Activated CD8-positive, alpha-beta T cell treated with anti-CD3 and anti-CD28 coated beads, Interleukin-2, amount 10 ng/mL, durations not matched to agents 7 days and 5 days (primary cell): ENCODE measurements at regions of chr2 and their contacts with region 1.

Region 1: DNA sequence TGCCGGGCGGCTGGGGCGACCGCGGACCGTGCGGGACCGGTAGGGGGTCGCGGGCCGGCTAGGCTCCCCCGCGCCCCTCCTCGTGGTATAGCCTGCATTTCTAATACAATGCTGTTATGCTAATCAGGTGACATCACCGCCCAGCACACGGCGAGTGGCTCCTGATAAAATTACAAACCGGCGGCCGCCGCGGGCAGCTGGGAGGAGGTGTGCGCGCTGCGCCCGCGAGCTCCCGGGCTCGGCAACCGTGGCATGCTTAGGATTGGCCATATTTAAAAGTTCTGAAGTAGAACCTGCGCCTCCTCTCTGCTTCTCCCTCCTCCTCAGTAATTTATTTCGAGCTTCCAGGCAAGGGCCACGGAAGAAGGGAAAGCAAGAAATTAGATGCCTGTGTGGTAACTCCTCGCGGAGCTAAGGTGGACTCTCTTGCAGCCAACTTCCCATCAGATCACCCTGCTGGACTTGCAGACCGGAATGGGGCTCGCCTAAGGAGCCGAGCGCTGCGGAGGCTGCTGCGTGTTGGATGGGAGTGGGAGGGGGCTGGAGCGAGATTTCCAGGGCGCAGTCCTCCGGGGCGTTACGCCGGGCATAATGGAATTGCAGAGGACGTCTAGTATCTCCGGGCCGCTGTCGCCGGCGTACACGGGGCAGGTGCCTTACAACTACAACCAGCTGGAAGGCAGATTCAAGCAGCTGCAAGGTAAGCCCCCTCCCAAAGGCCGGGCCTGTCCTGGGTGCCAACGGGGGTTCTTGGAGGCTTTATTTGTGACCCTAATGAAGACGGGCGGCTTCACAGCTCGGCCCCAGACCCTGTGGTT is 102.3 kb downstream of the SPTBN1 start:
- DNase-seq: peak; percentile 82
- ATAC-seq: peak; percentile 73
- H3K4me3 Mint-ChIP-seq: peak overlapping the region; percentile 93
- H3K27ac Mint-ChIP-seq: peak overlapping the region; percentile 90
- H3K4me1 Mint-ChIP-seq: peaks cover 42% of the 10 kb centered on the region
- H3K27me3 Mint-ChIP-seq: no peaks in the 10 kb centered on the region

Region 2: DNA sequence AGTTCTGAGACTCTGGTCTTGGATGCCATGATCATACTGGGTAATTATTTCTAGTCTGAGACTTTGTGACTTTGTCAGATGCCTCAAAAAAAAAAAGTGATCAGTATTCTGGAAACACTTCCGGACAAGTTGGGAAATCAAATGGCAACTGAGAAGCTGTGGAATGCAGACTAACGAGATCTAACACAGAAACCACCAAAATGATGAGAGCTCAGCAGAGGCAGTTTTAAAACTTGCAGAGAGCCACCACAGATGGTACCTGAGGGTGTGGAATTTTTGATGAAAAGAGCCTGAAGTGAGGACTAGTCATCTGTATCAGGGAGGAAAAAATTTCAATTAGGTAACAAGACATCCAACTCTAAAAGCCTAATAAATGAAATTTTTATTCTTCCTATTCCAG is 693.1 kb before region 1 on chr2:
- CTCF ChIA-PET with region 1: no interaction called
- POLR2A ChIA-PET with region 1: no interaction called
- DNase-seq: no peak
- ATAC-seq: no peak
- H3K4me3 Mint-ChIP-seq: no peak overlapping the region
- H3K27ac Mint-ChIP-seq: peak overlapping the region; percentile 16
- H3K4me1 Mint-ChIP-seq: no peaks in the 10 kb centered on the region
- H3K27me3 Mint-ChIP-seq: no peaks in the 10 kb centered on the region

Region 3: GRCh38 chr2:54522624-54523281 is 35.6 kb before region 1 on chr2:
- CTCF ChIA-PET with region 1: interaction called, 38 read pairs
- POLR2A ChIA-PET with region 1: interaction called, 19 read pairs
- DNase-seq: peak; percentile 78
- ATAC-seq: peak; percentile 99
- H3K4me3 Mint-ChIP-seq: no peak overlapping the region
- H3K27ac Mint-ChIP-seq: no peak overlapping the region
- H3K4me1 Mint-ChIP-seq: peaks cover 21% of the 10 kb centered on the region
- H3K27me3 Mint-ChIP-seq: peaks cover 9% of the 10 kb centered on the region

Region 4: DNA sequence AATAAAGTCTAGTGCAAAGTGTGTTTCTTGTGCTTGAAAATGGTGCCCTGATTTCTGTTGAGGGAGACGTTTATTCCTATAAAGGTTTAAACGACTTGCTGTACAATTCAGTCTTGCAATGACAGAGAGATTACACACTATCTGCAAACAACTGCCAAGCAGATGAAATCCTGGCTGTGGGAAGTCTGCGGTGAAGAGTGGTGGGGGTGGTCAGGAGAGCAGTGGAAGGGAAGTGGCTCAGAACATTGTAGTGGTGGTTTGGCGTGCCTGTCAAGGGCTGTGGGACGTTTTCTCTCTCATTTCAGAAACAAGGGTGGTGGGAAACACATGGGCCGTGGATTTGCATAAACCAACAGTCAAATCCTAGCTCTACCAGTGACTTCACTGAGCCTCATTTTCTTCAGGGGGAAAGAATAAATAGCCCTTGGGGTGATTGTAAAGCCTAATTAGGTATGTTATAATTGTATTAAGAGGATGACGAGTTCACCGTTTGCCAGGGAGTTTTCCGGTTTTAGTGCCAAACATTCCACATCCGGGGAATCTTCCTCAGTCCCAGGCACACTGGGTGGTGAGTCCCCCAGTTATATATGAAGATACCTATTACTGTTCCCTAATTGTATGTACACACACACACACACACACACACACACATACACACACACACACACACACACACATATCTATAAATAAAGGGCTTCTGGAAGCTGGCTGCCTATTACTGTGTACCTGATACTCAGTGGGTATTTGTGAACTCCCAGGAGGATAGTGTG is 12.7 kb after region 1 on chr2:
- CTCF ChIA-PET with region 1: interaction called, 116 read pairs
- POLR2A ChIA-PET with region 1: interaction called, 258 read pairs
- DNase-seq: peak; percentile 88
- ATAC-seq: peak; percentile 41
- H3K4me3 Mint-ChIP-seq: peak overlapping the region; percentile 72
- H3K27ac Mint-ChIP-seq: peak overlapping the region; percentile 84
- H3K4me1 Mint-ChIP-seq: peaks cover 90% of the 10 kb centered on the region
- H3K27me3 Mint-ChIP-seq: no peaks in the 10 kb centered on the region

Region 5: GRCh38 chr2:54589340-54590215 is 31.2 kb after region 1 on chr2:
- CTCF ChIA-PET with region 1: interaction called, 17 read pairs
- POLR2A ChIA-PET with region 1: interaction called, 47 read pairs
- DNase-seq: peak; percentile 59
- ATAC-seq: peak; percentile 71
- H3K4me3 Mint-ChIP-seq: peak overlapping the region; percentile 59
- H3K27ac Mint-ChIP-seq: peak overlapping the region; percentile 89
- H3K4me1 Mint-ChIP-seq: peaks cover 80% of the 10 kb centered on the region
- H3K27me3 Mint-ChIP-seq: no peaks in the 10 kb centered on the region

Region 6: DNA sequence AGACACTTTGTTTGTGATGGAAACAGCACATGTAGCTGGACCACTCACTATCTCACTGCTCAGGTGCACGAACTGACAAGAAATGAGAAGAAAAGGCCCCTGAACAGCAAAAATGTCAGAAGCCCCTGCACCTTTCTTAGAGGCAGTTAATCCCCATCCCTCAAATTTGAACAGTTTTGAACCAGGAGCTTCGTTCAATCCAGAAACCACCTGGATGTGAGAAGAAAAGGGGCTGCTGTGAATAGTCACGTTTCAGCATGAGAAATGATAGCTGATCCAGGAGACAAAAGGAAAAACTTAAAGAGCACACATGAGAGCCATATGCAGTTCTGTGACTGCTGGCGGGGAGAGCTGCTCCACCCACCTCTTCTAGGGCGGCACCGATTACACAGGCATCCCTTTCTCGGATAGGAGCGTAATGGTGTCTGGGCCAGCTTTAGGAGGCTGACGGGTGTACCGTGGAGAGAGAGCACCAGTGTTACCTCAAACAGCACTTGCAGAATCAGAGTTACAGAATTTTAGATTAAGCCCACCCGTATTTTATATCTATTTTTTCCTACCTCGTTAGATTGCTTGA is 48.1 kb after region 1 on chr2:
- CTCF ChIA-PET with region 1: interaction called, 41 read pairs
- POLR2A ChIA-PET with region 1: interaction called, 14 read pairs
- DNase-seq: peak; percentile 42
- ATAC-seq: peak; percentile 57
- H3K4me3 Mint-ChIP-seq: peak overlapping the region; percentile 47
- H3K27ac Mint-ChIP-seq: peak overlapping the region; percentile 72
- H3K4me1 Mint-ChIP-seq: peaks cover 76% of the 10 kb centered on the region
- H3K27me3 Mint-ChIP-seq: no peaks in the 10 kb centered on the region

Region 7: GRCh38 chr2:54704688-54705605 is 146.6 kb after region 1 on chr2:
- CTCF ChIA-PET with region 1: interaction called, 14 read pairs
- POLR2A ChIA-PET with region 1: no interaction called
- DNase-seq: no peak
- ATAC-seq: peak; percentile 54
- H3K4me3 Mint-ChIP-seq: no peak overlapping the region
- H3K27ac Mint-ChIP-seq: no peak overlapping the region
- H3K4me1 Mint-ChIP-seq: peaks cover 15% of the 10 kb centered on the region
- H3K27me3 Mint-ChIP-seq: peaks cover 37% of the 10 kb centered on the region